ENCODE measurements at regions of chr5 and their contacts with region 1.

Region 1: GRCh38 chr5:146049014-146049703 is 56.2 kb downstream of the PLAC8L1 start:
- DNase-seq: peak; percentile 58 to 75
- H3K4me3 ChIP-seq: no peak overlapping the region
- H3K4me3 Mint-ChIP-seq: no peak overlapping the region
- H3K27ac Mint-ChIP-seq: peak overlapping the region; percentile 14
- H3K4me1 ChIP-seq: peaks cover 30% of the 10 kb centered on the region
- H3K4me1 Mint-ChIP-seq: peaks cover 38% of the 10 kb centered on the region
- H3K27me3 ChIP-seq: no peaks in the 10 kb centered on the region
- H3K27me3 Mint-ChIP-seq: no peaks in the 10 kb centered on the region
- CTCF ChIP-seq: peak; percentile 80

Region 2: GRCh38 chr5:145681686-145682085 is 367.5 kb before region 1 on chr5:
- CTCF ChIA-PET with region 1: no interaction called
- POLR2A ChIA-PET with region 1: no interaction called
- intact Hi-C with region 1: loop called (anchors 1 kb)
- DNase-seq: peak; percentile 75 to 80
- H3K4me3 ChIP-seq: no peak overlapping the region
- H3K4me3 Mint-ChIP-seq: no peak overlapping the region
- H3K27ac Mint-ChIP-seq: no peak overlapping the region
- H3K4me1 ChIP-seq: peaks cover 24% of the 10 kb centered on the region
- H3K4me1 Mint-ChIP-seq: peaks cover 31% of the 10 kb centered on the region
- H3K27me3 ChIP-seq: no peaks in the 10 kb centered on the region
- H3K27me3 Mint-ChIP-seq: no peaks in the 10 kb centered on the region
- CTCF ChIP-seq: peak; percentile 80 to 91

Region 3: DNA sequence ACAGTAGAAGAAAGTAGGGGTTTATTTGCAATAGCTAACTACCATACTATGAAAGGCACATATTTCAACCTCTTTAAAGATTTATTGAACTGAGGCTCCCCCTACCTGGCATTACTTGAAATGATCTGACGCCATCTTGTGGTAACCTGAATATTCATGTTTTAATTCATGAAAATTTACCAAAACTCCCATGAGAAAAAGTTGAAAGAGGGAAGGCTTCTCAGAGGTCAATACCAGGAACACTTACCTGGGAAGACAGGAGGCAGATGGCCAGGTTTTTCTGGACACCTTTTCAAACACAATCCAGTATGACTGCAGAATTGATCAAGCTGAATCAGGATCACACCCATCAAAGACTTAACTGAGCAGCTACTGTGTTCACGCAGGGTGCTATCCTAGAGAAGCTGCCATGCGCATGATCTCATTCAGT is 223.4 kb before region 1 on chr5:
- CTCF ChIA-PET with region 1: no interaction called
- POLR2A ChIA-PET with region 1: no interaction called
- intact Hi-C with region 1: loop called (anchors 1 kb)
- DNase-seq: peak in 1 of 2 experiments; percentile 45
- H3K4me3 ChIP-seq: no peak overlapping the region
- H3K4me3 Mint-ChIP-seq: no peak overlapping the region
- H3K27ac Mint-ChIP-seq: no peak overlapping the region
- H3K4me1 ChIP-seq: no peaks in the 10 kb centered on the region
- H3K4me1 Mint-ChIP-seq: peaks cover 16% of the 10 kb centered on the region
- H3K27me3 ChIP-seq: no peaks in the 10 kb centered on the region
- H3K27me3 Mint-ChIP-seq: no peaks in the 10 kb centered on the region
- CTCF ChIP-seq: peak; percentile 77 to 94

Region 4: GRCh38 chr5:145908205-145908945 is 140.8 kb before region 1 on chr5:
- CTCF ChIA-PET with region 1: no interaction called
- POLR2A ChIA-PET with region 1: no interaction called
- intact Hi-C with region 1: loop called (anchors 1 kb)
- DNase-seq: peak in 1 of 2 experiments; percentile 52
- H3K4me3 ChIP-seq: no peak overlapping the region
- H3K4me3 Mint-ChIP-seq: no peak overlapping the region
- H3K27ac Mint-ChIP-seq: peak overlapping the region; percentile 18
- H3K4me1 ChIP-seq: peaks cover 14% of the 10 kb centered on the region; the same call in 1 of the 2 replicates
- H3K4me1 Mint-ChIP-seq: peaks cover 29% of the 10 kb centered on the region
- H3K27me3 ChIP-seq: no peaks in the 10 kb centered on the region
- H3K27me3 Mint-ChIP-seq: no peaks in the 10 kb centered on the region
- CTCF ChIP-seq: peak; percentile 43 to 69

Region 5: DNA sequence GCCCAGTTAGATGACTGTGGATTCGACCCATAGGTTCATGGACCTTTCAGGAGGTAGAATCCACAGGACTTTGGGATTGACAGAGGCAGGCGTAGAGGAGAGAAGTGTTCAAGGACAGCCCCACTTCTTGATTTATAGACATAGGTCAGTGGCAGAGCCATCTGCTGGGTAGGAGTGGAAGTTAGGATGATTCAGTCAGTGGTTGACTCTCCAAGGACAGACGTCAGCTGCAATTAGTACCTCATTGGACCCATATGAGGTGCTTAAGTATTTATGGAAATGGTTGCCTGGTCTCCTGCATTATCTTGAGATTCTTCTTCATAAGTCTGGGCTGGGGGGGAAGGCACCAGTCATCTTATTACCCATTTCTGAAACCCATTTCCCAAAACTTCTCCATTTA is 41.9 kb before region 1 on chr5:
- CTCF ChIA-PET with region 1: no interaction called
- POLR2A ChIA-PET with region 1: no interaction called
- intact Hi-C with region 1: loop called (anchors 2 kb)
- DNase-seq: peak; percentile 19 to 42
- H3K4me3 ChIP-seq: no peak overlapping the region
- H3K4me3 Mint-ChIP-seq: no peak overlapping the region
- H3K27ac Mint-ChIP-seq: no peak overlapping the region
- H3K4me1 ChIP-seq: no peaks in the 10 kb centered on the region; the same call in 1 of the 2 replicates
- H3K4me1 Mint-ChIP-seq: peaks cover 19% of the 10 kb centered on the region
- H3K27me3 ChIP-seq: no peaks in the 10 kb centered on the region
- H3K27me3 Mint-ChIP-seq: no peaks in the 10 kb centered on the region
- CTCF ChIP-seq: peak in 1 of 2 experiments; percentile 29

Region 6: DNA sequence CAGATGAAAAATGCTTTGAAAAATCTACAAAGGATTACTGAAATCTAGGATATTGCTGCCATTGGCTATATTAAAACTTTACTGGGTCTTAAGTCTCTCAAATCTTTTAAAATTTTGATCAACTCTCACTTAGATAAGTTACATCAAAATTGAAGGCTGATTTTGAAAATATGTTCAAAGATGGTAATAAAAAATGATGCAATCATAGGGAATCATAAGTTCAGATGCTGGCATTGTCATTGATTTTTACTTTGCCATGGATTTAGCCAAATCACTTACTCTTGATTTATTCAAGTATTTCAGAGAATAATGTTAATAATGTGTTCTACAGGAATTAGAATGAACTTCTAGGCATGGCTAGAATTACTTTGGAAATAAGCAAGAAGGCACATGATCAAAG is 109.1 kb after region 1 on chr5:
- CTCF ChIA-PET with region 1: no interaction called
- POLR2A ChIA-PET with region 1: no interaction called
- intact Hi-C with region 1: no loop called
- DNase-seq: no peak
- H3K4me3 ChIP-seq: no peak overlapping the region
- H3K4me3 Mint-ChIP-seq: no peak overlapping the region
- H3K27ac Mint-ChIP-seq: no peak overlapping the region
- H3K4me1 ChIP-seq: no peaks in the 10 kb centered on the region
- H3K4me1 Mint-ChIP-seq: no peaks in the 10 kb centered on the region
- H3K27me3 ChIP-seq: no peaks in the 10 kb centered on the region
- H3K27me3 Mint-ChIP-seq: no peaks in the 10 kb centered on the region
- CTCF ChIP-seq: no peak